Transverse colon (tissue), 4 donors: ENCODE measurements at regions of chr16 and their contacts with region 1.

Region 1: GRCh38 chr16:62036101-62036801 is at the start of gene CDH8:
- DNase-seq: no peak
- H3K4me3 ChIP-seq: peak within 1 kb of the TSS in 1 of 4 donors; percentile 16
- H3K27ac ChIP-seq: no peak within 1 kb of the TSS
- H3K4me1 ChIP-seq: no peaks in the 10 kb centered on the region
- H3K27me3 ChIP-seq: peaks cover 33% of the 10 kb centered on the region
- CTCF ChIP-seq: no peak
- EP300 ChIP-seq: no peak
- POLR2A ChIP-seq: no peak
- total RNA-seq, gene CDH8: 1.5 TPM in 1 of 4 donors, not detected in the others

Region 2: DNA sequence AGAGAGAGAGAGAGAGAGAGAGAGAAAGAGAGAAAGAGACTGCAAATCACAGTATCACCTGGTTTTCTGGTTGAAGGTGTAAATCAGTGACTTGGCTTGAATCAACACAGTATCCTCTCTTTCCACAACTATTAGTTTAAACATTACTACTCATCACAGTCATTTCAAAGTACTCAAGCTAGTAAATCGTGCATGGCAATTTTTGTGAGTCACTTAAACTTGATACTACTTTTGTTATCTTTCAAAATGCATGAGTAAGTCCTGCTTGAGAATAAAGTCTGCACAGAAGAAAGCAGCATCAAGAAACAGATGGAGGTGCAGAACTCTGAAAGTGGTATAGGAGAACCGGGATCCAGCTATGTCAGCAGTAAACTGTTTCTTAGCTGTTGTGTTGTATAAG is 535.4 kb before region 1 on chr16:
- in situ Hi-C with region 1: no loop called
- intact Hi-C with region 1: loop called (anchors 5 kb)
- DNase-seq: no peak
- H3K4me3 ChIP-seq: no peak overlapping the region
- H3K27ac ChIP-seq: no peak overlapping the region
- H3K4me1 ChIP-seq: no peaks in the 10 kb centered on the region
- H3K27me3 ChIP-seq: no peaks in the 10 kb centered on the region
- CTCF ChIP-seq: no peak
- EP300 ChIP-seq: no peak
- POLR2A ChIP-seq: no peak

Region 3: DNA sequence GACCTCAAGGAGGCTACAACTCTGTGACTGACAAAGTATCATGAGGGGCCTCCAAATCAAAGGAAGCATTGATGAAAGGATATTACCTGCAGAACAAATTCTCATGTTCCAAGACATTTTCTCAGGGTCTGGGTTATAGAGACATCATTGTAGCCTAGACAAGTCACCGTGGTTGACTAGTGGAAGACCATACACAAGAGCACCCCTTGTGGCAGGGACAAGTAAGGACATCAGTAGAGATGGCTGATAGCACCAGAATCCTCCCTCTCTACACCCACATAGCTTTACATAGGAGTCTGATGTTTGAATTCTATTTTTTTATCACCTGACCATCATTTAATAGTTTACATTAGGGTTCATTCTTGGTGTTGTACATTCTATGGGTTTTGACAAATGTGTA is 32.5 kb after region 1 on chr16:
- in situ Hi-C with region 1: no loop called
- intact Hi-C with region 1: no loop called
- DNase-seq: no peak
- H3K4me3 ChIP-seq: no peak overlapping the region
- H3K27ac ChIP-seq: no peak overlapping the region
- H3K4me1 ChIP-seq: no peaks in the 10 kb centered on the region
- H3K27me3 ChIP-seq: no peaks in the 10 kb centered on the region
- CTCF ChIP-seq: no peak
- EP300 ChIP-seq: no peak
- POLR2A ChIP-seq: no peak